PC-9 (cell line): ENCODE measurements at regions of chr10 and their contacts with region 1.

Region 1: DNA sequence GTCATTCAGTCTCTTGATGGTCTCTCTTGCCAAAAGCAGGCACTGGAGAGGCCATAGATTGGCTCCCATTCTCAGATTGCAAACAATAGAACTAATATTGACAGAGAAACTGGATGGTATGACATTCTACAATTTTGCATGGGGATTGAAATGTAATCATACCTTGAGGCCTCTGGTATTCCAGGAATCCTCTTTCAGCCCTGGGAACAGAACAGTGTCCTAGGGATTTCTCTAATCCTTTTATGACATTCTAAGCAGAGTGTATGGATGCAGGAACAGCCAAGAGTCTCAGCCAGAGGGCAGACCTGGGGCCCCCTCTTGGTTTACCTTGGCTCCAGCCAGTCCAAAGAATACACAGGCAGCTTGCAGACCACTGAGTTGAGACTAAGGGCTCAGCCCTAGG is 206.4 kb downstream of the KCNMA1 start:
- DNase-seq: no peak
- H3K4me3 ChIP-seq: no peak overlapping the region
- H3K27ac ChIP-seq: no peak overlapping the region
- H3K4me1 ChIP-seq: no peaks in the 10 kb centered on the region
- H3K27me3 ChIP-seq: no peaks in the 10 kb centered on the region
- CTCF ChIP-seq: no peak

Region 2: GRCh38 chr10:77079592-77080300 is 351.5 kb before region 1 on chr10:
- CTCF ChIA-PET with region 1: no interaction called
- POLR2A ChIA-PET with region 1: no interaction called
- intact Hi-C with region 1: loop called (anchors 5 kb)
- DNase-seq: no peak
- H3K4me3 ChIP-seq: no peak overlapping the region
- H3K27ac ChIP-seq: no peak overlapping the region
- H3K4me1 ChIP-seq: no peaks in the 10 kb centered on the region
- H3K27me3 ChIP-seq: no peaks in the 10 kb centered on the region
- CTCF ChIP-seq: no peak

Region 3: GRCh38 chr10:77603534-77603927 is 172.3 kb after region 1 on chr10:
- CTCF ChIA-PET with region 1: no interaction called
- POLR2A ChIA-PET with region 1: no interaction called
- intact Hi-C with region 1: no loop called
- DNase-seq: peak in 1 of 2 experiments; percentile 30
- H3K4me3 ChIP-seq: no peak overlapping the region
- H3K27ac ChIP-seq: no peak overlapping the region
- H3K4me1 ChIP-seq: peaks cover 43% of the 10 kb centered on the region
- H3K27me3 ChIP-seq: no peaks in the 10 kb centered on the region
- CTCF ChIP-seq: no peak